Right cardiac atrium (tissue), 5 donors: ENCODE measurements at regions of chr10 and their contacts with region 1.

Region 1: GRCh38 chr10:128263891-128264688 is 137.9 kb upstream of the MKI67 start:
- DNase-seq: peak; percentile 69 to 81 (median 78)
- ATAC-seq: peak; percentile 45 to 48
- H3K4me3 ChIP-seq: no peak overlapping the region
- H3K27ac ChIP-seq: no peak overlapping the region
- H3K4me1 ChIP-seq: no peaks in the 10 kb centered on the region
- H3K27me3 ChIP-seq: peaks cover 3% of the 10 kb centered on the region

Region 2: DNA sequence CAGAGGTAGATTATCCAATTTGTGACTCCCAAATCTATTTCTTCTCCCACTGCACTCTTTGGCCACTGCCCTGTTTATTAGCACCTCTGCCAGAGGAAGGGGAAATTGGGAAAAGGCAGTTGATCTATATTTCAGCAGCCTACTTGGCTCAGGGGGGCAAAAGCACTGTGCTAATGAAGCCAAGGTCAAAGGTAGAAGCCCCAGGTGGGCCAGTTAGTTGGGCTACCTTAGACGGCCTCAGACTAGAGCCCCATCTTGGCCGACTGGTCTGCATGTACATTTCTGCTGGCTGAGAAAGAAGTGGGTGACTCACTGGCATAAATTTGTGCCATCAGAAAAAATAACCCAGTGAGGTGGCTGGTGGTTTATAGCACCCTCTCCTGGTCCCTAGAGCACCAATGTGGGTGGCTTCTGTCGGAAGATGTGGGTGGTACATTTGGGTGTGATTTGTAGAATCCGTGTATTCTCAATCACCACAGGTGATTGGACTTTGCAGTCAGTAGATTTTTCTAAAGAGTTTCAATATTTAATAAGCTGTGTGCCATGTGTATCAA is 155.5 kb after region 1 on chr10:
- intact Hi-C with region 1: loop called in 2 of 4 experiments (anchors 5 kb)
- DNase-seq: no peak
- ATAC-seq: peak in 1 of 2 donors; percentile 31
- H3K4me3 ChIP-seq: no peak overlapping the region
- H3K27ac ChIP-seq: no peak overlapping the region
- H3K4me1 ChIP-seq: no peaks in the 10 kb centered on the region
- H3K27me3 ChIP-seq: no peaks in the 10 kb centered on the region

Region 3: GRCh38 chr10:128429835-128430513 is 165.9 kb after region 1 on chr10:
- intact Hi-C with region 1: no loop called
- DNase-seq: no peak
- ATAC-seq: no peak
- H3K4me3 ChIP-seq: no peak overlapping the region
- H3K27ac ChIP-seq: no peak overlapping the region
- H3K4me1 ChIP-seq: no peaks in the 10 kb centered on the region
- H3K27me3 ChIP-seq: no peaks in the 10 kb centered on the region

Region 4: GRCh38 chr10:128526791-128527375 is 262.8 kb after region 1 on chr10:
- intact Hi-C with region 1: loop called in 3 of 4 experiments (anchors 10 kb)
- DNase-seq: peak in 1 of 3 donors; percentile 56
- ATAC-seq: peak in 1 of 2 donors; percentile 28
- H3K4me3 ChIP-seq: no peak overlapping the region
- H3K27ac ChIP-seq: no peak overlapping the region
- H3K4me1 ChIP-seq: peaks cover 2% of the 10 kb centered on the region
- H3K27me3 ChIP-seq: no peaks in the 10 kb centered on the region